Adrenal gland (tissue), 19 donors: ENCODE measurements at regions of chr9 and their contacts with region 1.

Region 1: GRCh38 chr9:117116084-117116483 is 298.8 kb downstream of the ASTN2 start:
- DNase-seq: no peak
- H3K4me3 ChIP-seq: no peak overlapping the region
- H3K27ac ChIP-seq: no peak overlapping the region
- H3K4me1 ChIP-seq: no peaks in the 10 kb centered on the region
- H3K27me3 ChIP-seq: no peaks in the 10 kb centered on the region
- CTCF ChIP-seq: no peak
- POLR2A ChIP-seq: no peak

Region 2: GRCh38 chr9:116987721-116988485 is 128.2 kb before region 1 on chr9:
- intact Hi-C with region 1: no loop called
- DNase-seq: no peak
- H3K4me3 ChIP-seq: no peak overlapping the region
- H3K27ac ChIP-seq: no peak overlapping the region
- H3K4me1 ChIP-seq: no peaks in the 10 kb centered on the region
- H3K27me3 ChIP-seq: no peaks in the 10 kb centered on the region
- CTCF ChIP-seq: no peak
- POLR2A ChIP-seq: no peak

Region 3: GRCh38 chr9:117050007-117050406 is 66.1 kb before region 1 on chr9:
- intact Hi-C with region 1: loop called in 1 of 2 experiments (anchors 10 kb)
- DNase-seq: no peak
- H3K4me3 ChIP-seq: no peak overlapping the region
- H3K27ac ChIP-seq: no peak overlapping the region
- H3K4me1 ChIP-seq: no peaks in the 10 kb centered on the region
- H3K27me3 ChIP-seq: no peaks in the 10 kb centered on the region
- CTCF ChIP-seq: no peak
- POLR2A ChIP-seq: no peak

Region 4: DNA sequence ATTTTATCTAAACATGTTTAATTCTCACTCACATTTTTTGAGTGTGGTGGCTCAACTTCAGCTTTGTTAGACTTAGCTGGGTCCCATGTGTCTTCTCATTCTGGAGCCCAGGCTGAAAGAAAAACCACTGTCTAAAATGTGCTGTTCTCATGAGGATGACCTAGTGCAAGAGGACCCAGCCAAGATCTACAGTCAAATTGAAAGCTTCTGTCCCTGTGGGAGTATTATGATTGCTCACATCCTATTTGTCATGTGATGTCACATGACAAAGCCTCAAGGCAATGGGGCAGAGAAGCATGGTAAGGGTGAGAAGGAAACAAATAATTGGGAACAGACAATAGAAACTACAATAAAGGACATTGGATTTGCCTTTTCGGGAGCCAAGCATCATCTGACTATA is 412.1 kb after region 1 on chr9:
- intact Hi-C with region 1: no loop called
- DNase-seq: no peak
- H3K4me3 ChIP-seq: no peak overlapping the region
- H3K27ac ChIP-seq: no peak overlapping the region
- H3K4me1 ChIP-seq: no peaks in the 10 kb centered on the region
- H3K27me3 ChIP-seq: no peaks in the 10 kb centered on the region
- CTCF ChIP-seq: no peak
- POLR2A ChIP-seq: no peak